Activated CD8-positive, alpha-beta T cell treated with anti-CD3 and anti-CD28 coated beads for 36 hours (primary cell): ENCODE measurements at regions of chr2 and their contacts with region 1.

Region 1: GRCh38 chr2:205934443-205934842 is 151.5 kb downstream of the INO80D start:
- DNase-seq: no peak
- ATAC-seq: no peak
- H3K4me3 Mint-ChIP-seq: no peak overlapping the region
- H3K27ac Mint-ChIP-seq: no peak overlapping the region
- H3K4me1 Mint-ChIP-seq: no peaks in the 10 kb centered on the region
- H3K27me3 Mint-ChIP-seq: peaks cover 17% of the 10 kb centered on the region
- CTCF ChIP-seq: no peak

Region 2: GRCh38 chr2:205947621-205948495 is 13.4 kb after region 1 on chr2:
- CTCF ChIA-PET with region 1: interaction called, 32 read pairs
- POLR2A ChIA-PET with region 1: no interaction called
- intact Hi-C with region 1: no loop called
- DNase-seq: peak; percentile 73
- ATAC-seq: peak; percentile 79
- H3K4me3 Mint-ChIP-seq: no peak overlapping the region
- H3K27ac Mint-ChIP-seq: no peak overlapping the region
- H3K4me1 Mint-ChIP-seq: no peaks in the 10 kb centered on the region
- H3K27me3 Mint-ChIP-seq: peaks cover 15% of the 10 kb centered on the region
- CTCF ChIP-seq: peak; percentile 75